ENCODE measurements at regions of chr2 and their contacts with region 1.

Region 1: DNA sequence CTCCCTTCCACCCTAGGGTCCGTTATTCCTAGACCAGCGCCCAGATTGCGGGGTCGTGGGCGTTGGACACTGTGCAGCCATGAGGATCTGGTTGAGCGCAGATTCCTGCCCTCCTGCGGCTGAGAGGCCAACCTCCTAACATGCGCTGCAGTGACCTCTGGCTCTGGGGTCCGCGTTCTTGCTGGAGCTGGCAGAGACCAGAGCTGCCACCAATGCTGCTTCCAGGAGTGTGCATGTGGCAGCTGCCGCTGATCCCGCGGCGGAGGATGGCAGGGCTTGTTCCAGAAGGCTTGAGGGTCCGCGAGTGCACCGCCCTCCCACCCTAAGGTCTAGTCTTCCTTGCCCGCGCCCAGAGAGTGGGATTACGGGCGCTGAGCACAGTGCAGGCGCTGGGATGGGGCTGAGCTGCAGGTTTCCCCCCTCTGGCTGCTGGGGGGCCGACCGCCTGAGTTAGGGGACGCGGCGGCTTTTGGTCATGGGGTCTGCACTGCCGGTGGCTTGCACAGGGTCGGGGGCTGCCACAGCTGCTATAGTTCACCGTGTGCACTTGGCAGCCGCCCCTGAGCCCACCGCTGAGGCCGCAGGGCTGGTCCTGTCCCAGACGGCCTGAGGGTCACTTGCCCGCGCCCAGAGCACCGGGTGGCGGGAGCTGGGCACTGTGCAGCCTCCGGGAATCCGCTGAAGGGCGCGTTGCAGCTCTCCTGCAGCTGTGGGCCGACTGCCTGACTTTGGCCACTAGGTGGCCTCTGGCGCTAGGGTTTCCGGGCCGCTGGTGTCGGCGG is 145.9 kb downstream of the CCDC74A start:
- H3K4me3 ChIP-seq: peak overlapping the region; percentile 46
- H3K27ac ChIP-seq: no peak overlapping the region; the same call in 1 of the 2 replicates
- H3K4me1 ChIP-seq: no peaks in the 10 kb centered on the region
- CTCF ChIP-seq: peak; percentile 94

Region 2: DNA sequence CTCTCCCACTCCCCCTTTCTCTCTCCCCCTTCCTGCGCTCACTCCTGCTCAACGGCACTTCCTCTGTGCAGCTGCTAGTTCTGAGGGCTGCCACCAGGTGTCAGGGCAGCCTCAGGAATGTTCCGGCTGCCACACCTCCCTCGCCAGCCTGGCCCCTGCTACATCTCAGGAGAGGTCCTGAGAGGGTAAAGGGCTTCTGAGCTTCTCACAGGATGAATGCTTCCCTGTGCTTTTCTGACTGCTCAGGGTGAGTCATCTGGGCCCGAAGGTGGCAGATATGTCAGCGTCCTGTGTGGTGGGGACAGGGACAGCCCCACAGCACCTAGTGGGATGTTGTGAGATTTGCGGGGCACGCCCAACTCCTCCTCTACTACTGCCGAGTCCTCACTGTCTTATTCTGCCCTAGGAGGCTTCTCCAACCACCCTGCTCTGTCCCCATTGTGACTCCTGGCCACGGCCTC is 519.5 kb before region 1 on chr2:
- CTCF ChIA-PET with region 1: interaction called, 24 read pairs
- POLR2A ChIA-PET with region 1: no interaction called
- H3K4me3 ChIP-seq: no peak overlapping the region
- H3K27ac ChIP-seq: no peak overlapping the region
- H3K4me1 ChIP-seq: no peaks in the 10 kb centered on the region
- CTCF ChIP-seq: peak; percentile 95

Region 3: DNA sequence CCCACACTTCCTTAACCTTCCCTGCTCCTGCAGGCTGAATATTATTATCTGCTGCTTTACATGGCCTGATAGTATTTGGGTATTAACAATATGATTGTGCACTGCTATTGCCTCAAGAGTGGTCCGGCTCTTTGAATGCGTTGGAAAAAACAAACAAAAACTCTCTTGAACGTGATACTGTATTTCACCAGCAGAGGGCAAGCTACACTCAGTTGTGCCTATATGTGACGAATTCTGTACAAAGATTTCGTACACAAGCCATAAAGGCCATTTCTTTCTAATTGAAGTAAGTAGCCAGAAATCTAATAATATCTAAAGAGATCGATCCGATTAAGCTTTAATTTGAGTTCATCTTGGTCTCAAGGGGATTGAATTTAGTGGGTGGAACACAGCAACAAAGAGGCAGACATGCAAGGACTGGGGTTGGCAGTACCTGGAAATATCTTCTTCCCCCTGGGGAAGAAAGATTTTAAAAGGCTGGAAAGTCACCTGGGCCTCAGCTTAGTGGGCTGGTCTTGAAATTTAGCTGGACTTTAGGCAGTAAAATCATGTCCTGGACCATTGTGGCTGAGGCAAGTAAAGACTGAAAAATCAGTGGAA is 260.3 kb before region 1 on chr2:
- CTCF ChIA-PET with region 1: interaction called, 29 read pairs
- POLR2A ChIA-PET with region 1: no interaction called
- H3K4me3 ChIP-seq: no peak overlapping the region
- H3K27ac ChIP-seq: no peak overlapping the region
- H3K4me1 ChIP-seq: no peaks in the 10 kb centered on the region
- CTCF ChIP-seq: peak; percentile 65

Region 4: DNA sequence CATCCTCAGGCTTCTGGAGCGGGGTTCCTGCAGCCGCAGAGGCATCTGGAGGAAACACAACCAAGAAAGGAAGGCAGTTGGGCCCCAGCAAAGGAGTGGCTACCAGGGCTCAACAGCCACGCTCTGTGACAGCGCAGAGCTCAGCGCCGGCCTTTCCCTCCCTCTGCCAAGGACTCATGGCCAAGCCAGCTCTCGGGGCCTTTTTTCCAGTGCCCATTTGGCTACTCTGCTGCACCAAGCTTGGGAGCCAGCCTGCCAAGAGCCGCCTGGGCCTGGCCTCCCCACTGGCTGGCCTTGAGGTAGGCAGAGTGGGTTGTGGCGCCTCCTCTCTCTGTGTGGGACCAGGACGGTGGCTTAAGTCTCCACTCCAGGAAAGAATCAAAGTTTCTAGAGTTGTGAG is 153.1 kb before region 1 on chr2:
- CTCF ChIA-PET with region 1: no interaction called
- POLR2A ChIA-PET with region 1: no interaction called
- H3K4me3 ChIP-seq: no peak overlapping the region
- H3K27ac ChIP-seq: no peak overlapping the region
- H3K4me1 ChIP-seq: no peaks in the 10 kb centered on the region
- CTCF ChIP-seq: no peak

Region 5: GRCh38 chr2:131801210-131801744 is 127.7 kb after region 1 on chr2:
- CTCF ChIA-PET with region 1: interaction called, 18 read pairs
- POLR2A ChIA-PET with region 1: interaction called, 3 read pairs
- H3K4me3 ChIP-seq: no peak overlapping the region
- H3K27ac ChIP-seq: no peak overlapping the region
- H3K4me1 ChIP-seq: no peaks in the 10 kb centered on the region
- CTCF ChIP-seq: no peak

Measured in HEK293 (cell line).